IMR-90 (cell line): ENCODE measurements at regions of chr7 and their contacts with region 1.

Region 1: DNA sequence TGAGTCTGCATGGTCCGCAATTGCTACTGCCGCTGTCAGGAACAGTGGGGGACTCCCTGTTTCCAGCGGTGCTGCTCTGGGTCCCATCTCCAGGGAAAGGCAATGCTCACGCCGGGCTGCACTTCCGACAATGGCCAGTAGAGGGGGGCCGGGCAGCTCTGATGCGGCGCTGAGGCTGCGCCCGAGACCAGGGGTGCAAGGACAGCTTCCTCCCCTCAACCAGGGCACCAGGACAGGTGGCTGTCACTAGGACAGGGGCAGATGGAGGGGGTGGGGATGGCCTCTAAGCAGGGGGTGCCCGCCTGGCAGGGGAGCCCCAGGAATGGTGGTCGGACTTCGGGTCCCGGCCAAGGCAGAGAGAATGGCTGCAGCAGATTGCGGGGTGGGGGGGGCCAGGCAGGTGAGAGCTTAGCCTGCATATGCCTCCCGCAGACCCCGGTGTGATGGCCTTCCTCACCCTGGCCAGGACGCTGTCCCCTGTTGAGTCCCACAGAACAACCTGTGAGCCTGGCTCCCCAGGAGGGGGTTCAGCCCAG is 71.0 kb upstream of the KCTD7 start:
- DNase-seq: peak; percentile 31
- ATAC-seq: peak; percentile 88
- H3K4me3 ChIP-seq: no peak overlapping the region
- H3K27ac ChIP-seq: no peak overlapping the region
- H3K4me1 ChIP-seq: peaks cover 8% of the 10 kb centered on the region; the same call in 1 of the 2 replicates
- H3K27me3 ChIP-seq: no peaks in the 10 kb centered on the region
- CTCF ChIP-seq: peak; percentile 80
- POLR2A ChIP-seq: no peak
- RAD21 ChIP-seq: peak; percentile 81

Region 2: GRCh38 chr7:66571568-66571967 is 13.9 kb after region 1 on chr7:
- CTCF ChIA-PET with region 1: no interaction called
- POLR2A ChIA-PET with region 1: no interaction called
- dilution Hi-C with region 1: no loop called
- in situ Hi-C with region 1: no loop called
- intact Hi-C with region 1: no loop called
- DNase-seq: no peak
- ATAC-seq: no peak
- H3K4me3 ChIP-seq: no peak overlapping the region
- H3K27ac ChIP-seq: no peak overlapping the region
- H3K4me1 ChIP-seq: peaks cover 6% of the 10 kb centered on the region
- H3K27me3 ChIP-seq: no peaks in the 10 kb centered on the region
- CTCF ChIP-seq: no peak
- POLR2A ChIP-seq: no peak
- RAD21 ChIP-seq: no peak

Region 3: DNA sequence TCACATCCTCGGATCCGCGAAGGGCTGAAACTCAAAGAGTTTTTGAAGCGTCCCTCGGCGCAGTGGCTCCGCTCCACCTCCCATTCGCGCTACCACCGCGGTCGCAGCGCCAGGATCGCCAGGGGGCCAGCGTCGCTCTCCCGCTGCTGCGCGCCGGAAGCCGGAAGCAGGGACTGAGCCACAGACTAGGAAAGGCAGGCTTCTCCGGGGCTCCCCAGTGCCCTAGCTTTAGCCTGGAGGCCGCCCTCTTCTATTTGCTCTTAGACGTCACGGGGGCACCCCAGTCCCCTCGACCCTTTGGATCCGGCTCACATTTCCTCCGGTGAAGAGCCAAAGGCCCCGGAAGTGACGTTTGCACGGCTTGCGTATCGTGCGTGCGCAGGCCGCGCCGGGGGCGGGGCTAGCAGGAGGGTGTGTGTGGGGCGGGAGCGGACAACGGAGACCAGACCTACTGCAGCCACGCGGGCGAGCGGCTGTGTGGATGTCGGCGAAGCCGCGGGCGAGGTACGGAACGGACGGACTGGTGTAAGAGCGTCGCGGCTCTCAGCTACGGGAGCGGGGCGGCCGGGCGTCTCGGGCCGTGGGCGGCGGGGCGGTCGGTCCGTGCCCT is 96.6 kb after region 1 on chr7:
- CTCF ChIA-PET with region 1: interaction called, 4 read pairs
- POLR2A ChIA-PET with region 1: no interaction called
- dilution Hi-C with region 1: no loop called
- in situ Hi-C with region 1: no loop called
- intact Hi-C with region 1: loop called (anchors 1 kb)
- DNase-seq: peak; percentile 97
- ATAC-seq: peak; percentile 93
- H3K4me3 ChIP-seq: peak overlapping the region; percentile 60
- H3K27ac ChIP-seq: peak overlapping the region; percentile 88
- H3K4me1 ChIP-seq: peaks cover 4% of the 10 kb centered on the region; the same call in 1 of the 2 replicates
- H3K27me3 ChIP-seq: no peaks in the 10 kb centered on the region
- CTCF ChIP-seq: 0 out of 2 replicates have a peak, but pooled peaks have one; percentile 20
- POLR2A ChIP-seq: peak; percentile 98
- RAD21 ChIP-seq: peak; percentile 8; the same call in 1 of the 2 replicates

Region 4: DNA sequence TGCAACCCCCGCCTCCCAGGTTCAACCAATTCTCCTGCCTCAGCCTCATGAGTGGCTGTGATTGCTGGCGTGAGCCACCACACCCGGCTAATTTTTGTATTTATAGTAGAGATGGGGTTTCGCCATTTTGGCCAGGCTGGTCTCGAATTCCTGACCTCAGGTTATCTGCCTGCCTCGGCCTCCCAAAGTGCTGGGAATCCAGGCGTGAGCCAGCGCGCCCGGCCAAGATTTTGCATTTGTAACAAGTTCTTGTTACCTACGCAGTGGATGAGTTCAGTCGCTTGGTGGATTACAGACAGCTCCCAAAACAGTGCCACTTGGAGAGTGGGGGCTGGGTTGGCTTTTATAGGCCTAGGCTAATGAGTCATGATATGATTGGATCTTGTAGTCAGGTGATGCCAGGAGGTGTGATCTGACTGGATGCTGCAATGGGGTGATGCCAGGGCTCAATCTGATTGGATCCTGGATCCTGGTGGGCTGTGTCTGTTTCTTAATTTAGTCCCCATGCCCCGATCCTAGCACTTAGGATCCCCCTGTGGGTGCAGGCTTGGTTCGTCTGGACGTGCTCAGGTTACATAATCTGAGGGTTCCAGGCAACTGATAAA is 417.4 kb after region 1 on chr7:
- CTCF ChIA-PET with region 1: no interaction called
- POLR2A ChIA-PET with region 1: no interaction called
- dilution Hi-C with region 1: no loop called
- in situ Hi-C with region 1: loop called (anchors 25 kb)
- intact Hi-C with region 1: no loop called
- DNase-seq: no peak
- ATAC-seq: no peak
- H3K4me3 ChIP-seq: no peak overlapping the region
- H3K27ac ChIP-seq: no peak overlapping the region
- H3K4me1 ChIP-seq: peaks cover 2% of the 10 kb centered on the region; the same call in 1 of the 2 replicates
- H3K27me3 ChIP-seq: no peaks in the 10 kb centered on the region
- CTCF ChIP-seq: no peak
- POLR2A ChIP-seq: no peak
- RAD21 ChIP-seq: no peak